Activated B cell treated with CpG ODN at 0.5 μM for 24 hours (primary cell): ENCODE measurements at regions of chr15 and their contacts with region 1.

Region 1: GRCh38 chr15:70512772-70513362 is 250.5 kb downstream of the UACA start:
- DNase-seq: no peak
- ATAC-seq: peak; percentile 80
- H3K4me3 Mint-ChIP-seq: no peak overlapping the region
- H3K27ac Mint-ChIP-seq: no peak overlapping the region
- H3K4me1 Mint-ChIP-seq: peaks cover 32% of the 10 kb centered on the region
- H3K27me3 Mint-ChIP-seq: peaks cover 5% of the 10 kb centered on the region
- CTCF ChIP-seq: no peak

Region 2: DNA sequence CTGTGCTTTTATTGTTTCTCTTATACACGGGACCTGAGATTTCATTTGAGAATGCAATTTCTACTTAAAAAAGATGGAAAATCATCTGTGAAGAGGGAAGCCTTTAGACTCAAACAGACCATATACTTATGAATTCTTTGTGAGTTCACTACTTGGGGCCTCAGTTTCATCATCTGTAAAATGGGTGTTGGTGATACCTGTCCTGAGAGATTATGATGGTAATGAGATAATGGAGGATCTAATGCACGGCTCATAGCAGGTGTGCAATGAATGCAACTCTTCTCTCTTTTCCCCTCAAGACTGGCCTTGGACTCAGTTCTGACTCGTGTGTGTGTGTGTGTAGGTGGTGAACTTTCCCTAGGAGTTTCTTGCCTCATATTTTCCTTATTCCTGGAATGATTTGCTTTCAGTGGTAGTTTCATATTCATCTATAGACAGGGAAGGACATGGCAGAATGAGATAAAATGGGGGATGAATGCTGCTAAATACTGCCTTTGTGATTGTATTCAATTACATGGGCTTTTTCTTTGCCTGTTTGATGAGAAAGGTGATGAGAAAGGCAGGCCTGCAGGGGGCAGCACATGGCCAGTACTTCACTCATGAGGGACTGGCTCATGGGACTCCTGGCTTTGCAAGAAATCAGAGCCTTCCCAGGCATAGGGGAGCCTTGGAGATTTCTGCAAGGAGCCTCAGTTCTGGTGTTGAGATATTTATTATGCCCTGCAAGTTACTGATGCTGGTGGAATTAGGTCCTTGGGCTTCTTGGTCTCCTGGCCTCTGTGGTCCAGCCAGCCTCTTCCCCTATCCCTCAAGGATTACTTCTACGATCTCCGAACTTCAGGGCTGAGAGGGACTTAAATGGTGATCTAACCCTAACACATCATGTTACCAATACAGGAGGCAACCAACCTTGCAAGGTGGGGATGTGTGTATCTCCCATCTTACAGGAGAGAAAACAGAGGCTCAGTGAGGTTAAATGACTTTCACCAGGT is 989.6 kb before region 1 on chr15:
- CTCF ChIA-PET with region 1: no interaction called
- POLR2A ChIA-PET with region 1: no interaction called
- intact Hi-C with region 1: loop called (anchors 1 kb)
- DNase-seq: peak; percentile 32
- ATAC-seq: peak; percentile 42
- H3K4me3 Mint-ChIP-seq: no peak overlapping the region
- H3K27ac Mint-ChIP-seq: no peak overlapping the region
- H3K4me1 Mint-ChIP-seq: no peaks in the 10 kb centered on the region
- H3K27me3 Mint-ChIP-seq: peaks cover 12% of the 10 kb centered on the region
- CTCF ChIP-seq: no peak

Region 3: GRCh38 chr15:70152070-70152480 is 360.8 kb before region 1 on chr15:
- CTCF ChIA-PET with region 1: no interaction called
- POLR2A ChIA-PET with region 1: no interaction called
- intact Hi-C with region 1: no loop called
- DNase-seq: no peak
- ATAC-seq: peak; percentile 47
- H3K4me3 Mint-ChIP-seq: no peak overlapping the region
- H3K27ac Mint-ChIP-seq: no peak overlapping the region
- H3K4me1 Mint-ChIP-seq: peaks cover 3% of the 10 kb centered on the region
- H3K27me3 Mint-ChIP-seq: peaks cover 12% of the 10 kb centered on the region
- CTCF ChIP-seq: no peak

Region 4: GRCh38 chr15:70435369-70435768 is 77.5 kb before region 1 on chr15:
- CTCF ChIA-PET with region 1: no interaction called
- POLR2A ChIA-PET with region 1: no interaction called
- intact Hi-C with region 1: no loop called
- DNase-seq: peak; percentile 44
- ATAC-seq: peak; percentile 93
- H3K4me3 Mint-ChIP-seq: peak overlapping the region; percentile 55
- H3K27ac Mint-ChIP-seq: peak overlapping the region; percentile 67
- H3K4me1 Mint-ChIP-seq: peaks cover 28% of the 10 kb centered on the region
- H3K27me3 Mint-ChIP-seq: no peaks in the 10 kb centered on the region
- CTCF ChIP-seq: no peak

Region 5: DNA sequence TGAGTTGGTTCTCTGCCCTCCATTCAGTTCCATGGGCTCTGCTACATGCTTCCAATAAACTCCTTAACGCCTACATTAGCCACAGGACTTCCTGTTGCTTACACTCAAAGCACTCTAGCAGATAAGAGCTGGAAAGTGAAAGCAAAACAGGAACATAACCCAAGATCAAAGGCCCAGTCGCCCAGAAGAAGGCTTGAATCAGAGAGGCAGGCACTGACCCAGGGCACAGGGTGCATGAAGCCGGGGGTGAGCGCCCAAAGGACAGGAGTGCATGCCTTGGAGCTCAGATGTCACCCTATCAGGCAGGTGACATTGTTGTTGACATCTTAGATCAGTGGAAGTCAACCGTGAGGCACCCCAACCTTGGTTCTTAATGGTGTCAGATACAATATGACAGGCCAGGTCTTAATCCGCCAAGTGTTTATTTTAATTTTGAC is 15.4 kb after region 1 on chr15:
- CTCF ChIA-PET with region 1: interaction called, 4 read pairs
- POLR2A ChIA-PET with region 1: interaction called, 4 read pairs
- intact Hi-C with region 1: loop called (anchors 2 kb)
- DNase-seq: peak; percentile 30
- ATAC-seq: peak; percentile 72
- H3K4me3 Mint-ChIP-seq: peak overlapping the region; percentile 47
- H3K27ac Mint-ChIP-seq: peak overlapping the region; percentile 85
- H3K4me1 Mint-ChIP-seq: peaks cover 48% of the 10 kb centered on the region
- H3K27me3 Mint-ChIP-seq: no peaks in the 10 kb centered on the region
- CTCF ChIP-seq: no peak